Left cardiac atrium (tissue), 4 donors: ENCODE measurements at regions of chr3 and their contacts with region 1.

Region 1: GRCh38 chr3:58173664-58174398 is 36.9 kb downstream of the DNASE1L3 start:
- DNase-seq: peak; percentile 53
- ATAC-seq: peak in 1 of 2 donors; percentile 8

Region 2: GRCh38 chr3:58008140-58009025 is 165.4 kb before region 1 on chr3 and contains the start of gene FLNB:
- intact Hi-C with region 1: loop called in 1 of 2 experiments (anchors 2 kb)
- DNase-seq: peak; percentile 78
- ATAC-seq: peak; percentile 93 to 96
- total RNA-seq, gene FLNB: 28.0 to 94.4 TPM

Region 3: GRCh38 chr3:58502872-58503271 is 329.0 kb after region 1 on chr3:
- intact Hi-C with region 1: no loop called
- DNase-seq: no peak
- ATAC-seq: no peak